IMR-90 (cell line): ENCODE measurements at regions of chrX and their contacts with region 1.

Region 1: DNA sequence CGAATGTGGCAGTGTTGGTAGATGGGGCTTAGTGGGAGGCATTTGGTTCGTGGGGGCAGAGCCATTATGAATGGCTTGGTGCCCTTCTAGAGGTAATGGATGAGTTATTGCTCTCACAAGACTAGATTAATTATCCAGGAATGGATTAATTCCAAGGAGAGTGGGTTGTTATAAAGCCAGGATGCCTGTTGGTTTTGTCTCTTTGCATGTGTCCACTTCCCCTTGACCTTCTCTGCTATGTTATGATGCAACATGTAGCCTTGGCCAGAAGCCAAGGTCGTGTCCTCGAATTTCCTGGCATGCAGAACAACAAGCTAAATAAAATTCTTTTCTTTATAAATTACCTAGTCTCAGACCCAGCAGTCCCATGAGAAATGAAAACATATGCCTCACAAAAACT is 111.2 kb upstream of the PLS3 start:
- DNase-seq: no peak
- ATAC-seq: no peak
- H3K4me3 ChIP-seq: no peak overlapping the region
- H3K27ac ChIP-seq: no peak overlapping the region
- H3K4me1 ChIP-seq: no peaks in the 10 kb centered on the region
- H3K27me3 ChIP-seq: peaks cover 11% of the 10 kb centered on the region
- CTCF ChIP-seq: no peak
- POLR2A ChIP-seq: no peak
- RAD21 ChIP-seq: no peak

Region 2: GRCh38 chrX:113962343-113962742 is 1487.4 kb before region 1 on chrX:
- CTCF ChIA-PET with region 1: no interaction called
- POLR2A ChIA-PET with region 1: no interaction called
- dilution Hi-C with region 1: no loop called
- in situ Hi-C with region 1: no loop called
- intact Hi-C with region 1: no loop called
- DNase-seq: no peak
- ATAC-seq: no peak
- H3K4me3 ChIP-seq: no peak overlapping the region
- H3K27ac ChIP-seq: no peak overlapping the region
- H3K4me1 ChIP-seq: no peaks in the 10 kb centered on the region
- H3K27me3 ChIP-seq: no peaks in the 10 kb centered on the region; the same call in 1 of the 2 replicates
- CTCF ChIP-seq: no peak
- POLR2A ChIP-seq: no peak
- RAD21 ChIP-seq: no peak

Region 3: GRCh38 chrX:115147220-115147619 is 302.5 kb before region 1 on chrX:
- CTCF ChIA-PET with region 1: no interaction called
- POLR2A ChIA-PET with region 1: no interaction called
- dilution Hi-C with region 1: no loop called
- in situ Hi-C with region 1: no loop called
- intact Hi-C with region 1: no loop called
- DNase-seq: peak; percentile 40
- ATAC-seq: peak; percentile 44; the same call in 1 of the 2 replicates
- H3K4me3 ChIP-seq: no peak overlapping the region
- H3K27ac ChIP-seq: no peak overlapping the region
- H3K4me1 ChIP-seq: no peaks in the 10 kb centered on the region
- H3K27me3 ChIP-seq: no peaks in the 10 kb centered on the region
- CTCF ChIP-seq: peak; percentile 62
- POLR2A ChIP-seq: no peak
- RAD21 ChIP-seq: peak; percentile 60

Region 4: DNA sequence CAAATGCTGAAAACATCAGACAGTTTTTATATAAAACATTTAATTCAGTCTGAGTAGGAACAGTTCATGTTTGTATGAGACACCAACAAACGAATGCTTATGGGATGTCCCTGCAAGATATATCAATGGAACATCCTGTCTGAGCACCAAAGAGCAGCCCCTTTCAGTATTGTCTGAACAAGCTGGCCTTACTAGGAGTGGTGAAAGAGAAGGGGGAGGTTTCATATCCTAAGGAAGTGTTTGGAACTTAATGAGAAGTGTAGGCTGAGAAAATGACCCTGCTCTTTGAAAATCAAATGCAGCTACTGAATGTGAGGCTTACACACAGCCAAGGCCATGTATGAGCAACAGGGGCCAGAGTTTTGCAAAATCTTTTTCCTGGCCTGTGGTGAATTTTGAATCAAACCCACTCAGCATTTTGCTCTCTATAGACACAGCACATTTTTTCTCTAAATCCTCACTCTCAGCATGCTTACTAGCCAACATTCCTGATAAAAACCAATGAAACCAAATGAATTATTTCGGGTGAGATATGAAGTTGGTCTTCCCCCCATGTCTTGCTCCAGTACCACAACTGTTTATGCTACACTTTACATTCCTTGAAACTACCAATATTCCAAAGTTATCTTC is 40.9 kb before region 1 on chrX:
- CTCF ChIA-PET with region 1: no interaction called
- POLR2A ChIA-PET with region 1: no interaction called
- dilution Hi-C with region 1: no loop called
- in situ Hi-C with region 1: no loop called
- intact Hi-C with region 1: no loop called
- DNase-seq: peak; percentile 40
- ATAC-seq: peak; percentile 60
- H3K4me3 ChIP-seq: no peak overlapping the region
- H3K27ac ChIP-seq: no peak overlapping the region
- H3K4me1 ChIP-seq: peaks cover 2% of the 10 kb centered on the region; the same call in 1 of the 2 replicates
- H3K27me3 ChIP-seq: no peaks in the 10 kb centered on the region; the same call in 1 of the 2 replicates
- CTCF ChIP-seq: no peak
- POLR2A ChIP-seq: no peak
- RAD21 ChIP-seq: no peak

Region 5: GRCh38 chrX:115487608-115488007 is 37.9 kb after region 1 on chrX:
- CTCF ChIA-PET with region 1: no interaction called
- POLR2A ChIA-PET with region 1: no interaction called
- dilution Hi-C with region 1: no loop called
- in situ Hi-C with region 1: no loop called
- intact Hi-C with region 1: loop called (anchors 1 kb)
- DNase-seq: no peak
- ATAC-seq: no peak
- H3K4me3 ChIP-seq: no peak overlapping the region
- H3K27ac ChIP-seq: no peak overlapping the region
- H3K4me1 ChIP-seq: no peaks in the 10 kb centered on the region
- H3K27me3 ChIP-seq: no peaks in the 10 kb centered on the region; the same call in 1 of the 2 replicates
- CTCF ChIP-seq: no peak
- POLR2A ChIP-seq: no peak
- RAD21 ChIP-seq: no peak